AG04450 (cell line): ENCODE measurements at regions of chr5 and their contacts with region 1.

Region 1: DNA sequence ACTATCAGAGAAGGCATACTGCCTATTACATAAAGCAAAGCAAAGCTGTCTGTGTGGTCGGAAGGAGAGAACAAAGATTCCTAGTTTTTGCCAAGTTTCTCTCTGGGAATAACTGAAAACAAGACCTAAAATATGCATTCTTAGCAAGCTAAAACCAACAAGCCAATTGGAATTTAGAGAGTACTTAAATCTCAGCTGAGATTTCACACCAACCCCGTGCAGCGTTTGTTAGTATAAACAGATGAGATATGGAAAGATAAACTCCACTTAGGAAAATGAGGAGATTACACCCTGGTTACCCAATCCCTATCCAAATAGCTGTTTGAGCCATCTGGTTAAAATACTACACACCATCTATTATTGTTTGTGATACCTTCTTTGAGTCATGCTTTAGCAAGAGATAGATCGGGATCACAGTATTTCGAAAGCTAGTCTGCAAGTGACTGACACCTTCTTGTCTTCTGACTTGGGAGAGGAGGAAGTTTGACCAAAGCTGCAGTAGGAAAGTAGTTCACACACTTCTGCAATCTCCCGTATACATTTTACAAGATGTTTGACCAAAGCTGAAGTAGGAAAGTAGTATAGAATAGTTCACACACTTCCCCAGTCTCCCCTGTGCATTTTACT is 18.2 kb downstream of the FAF2 start:
- DNase-seq: peak; percentile 55
- H3K4me3 ChIP-seq: no peak overlapping the region
- H3K27ac ChIP-seq: no peak overlapping the region
- H3K27me3 ChIP-seq: no peaks in the 10 kb centered on the region
- CTCF ChIP-seq: no peak

Region 2: GRCh38 chr5:176319827-176320554 is 146.4 kb before region 1 on chr5:
- CTCF ChIA-PET with region 1: no interaction called
- POLR2A ChIA-PET with region 1: no interaction called
- DNase-seq: no peak
- H3K4me3 ChIP-seq: no peak overlapping the region
- H3K27ac ChIP-seq: no peak overlapping the region
- H3K27me3 ChIP-seq: no peaks in the 10 kb centered on the region
- CTCF ChIP-seq: 0 out of 2 replicates have a peak, but pooled peaks have one; percentile 31

Region 3: DNA sequence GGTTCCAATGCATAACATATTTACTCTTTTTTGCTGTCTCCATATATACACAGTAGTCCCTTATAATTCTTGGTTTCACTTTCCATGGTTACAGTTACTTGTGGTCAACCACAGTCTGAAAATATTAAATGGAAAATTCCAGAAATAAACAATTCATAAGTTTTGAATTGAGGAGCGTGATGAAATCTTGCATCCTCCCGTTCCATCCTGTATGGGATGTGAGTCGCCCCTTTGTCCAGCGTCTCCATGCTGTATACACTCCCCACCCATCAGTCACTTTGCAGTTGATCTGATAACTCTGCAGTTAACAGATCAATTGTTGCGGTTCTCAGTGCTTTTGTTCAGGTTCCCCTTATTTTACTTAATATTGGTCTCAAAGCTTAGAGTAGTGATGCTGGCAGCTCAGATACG is 29.7 kb before region 1 on chr5:
- CTCF ChIA-PET with region 1: no interaction called
- POLR2A ChIA-PET with region 1: interaction called, 13 read pairs
- DNase-seq: no peak
- H3K4me3 ChIP-seq: no peak overlapping the region
- H3K27ac ChIP-seq: no peak overlapping the region
- H3K27me3 ChIP-seq: no peaks in the 10 kb centered on the region
- CTCF ChIP-seq: no peak

Region 4: GRCh38 chr5:176537608-176538504 is 71.5 kb after region 1 on chr5:
- CTCF ChIA-PET with region 1: no interaction called
- POLR2A ChIA-PET with region 1: interaction called, 11 read pairs
- DNase-seq: peak; percentile 99
- H3K4me3 ChIP-seq: peak overlapping the region; percentile 99
- H3K27ac ChIP-seq: peak overlapping the region; percentile 94
- H3K27me3 ChIP-seq: no peaks in the 10 kb centered on the region
- CTCF ChIP-seq: no peak

Region 5: DNA sequence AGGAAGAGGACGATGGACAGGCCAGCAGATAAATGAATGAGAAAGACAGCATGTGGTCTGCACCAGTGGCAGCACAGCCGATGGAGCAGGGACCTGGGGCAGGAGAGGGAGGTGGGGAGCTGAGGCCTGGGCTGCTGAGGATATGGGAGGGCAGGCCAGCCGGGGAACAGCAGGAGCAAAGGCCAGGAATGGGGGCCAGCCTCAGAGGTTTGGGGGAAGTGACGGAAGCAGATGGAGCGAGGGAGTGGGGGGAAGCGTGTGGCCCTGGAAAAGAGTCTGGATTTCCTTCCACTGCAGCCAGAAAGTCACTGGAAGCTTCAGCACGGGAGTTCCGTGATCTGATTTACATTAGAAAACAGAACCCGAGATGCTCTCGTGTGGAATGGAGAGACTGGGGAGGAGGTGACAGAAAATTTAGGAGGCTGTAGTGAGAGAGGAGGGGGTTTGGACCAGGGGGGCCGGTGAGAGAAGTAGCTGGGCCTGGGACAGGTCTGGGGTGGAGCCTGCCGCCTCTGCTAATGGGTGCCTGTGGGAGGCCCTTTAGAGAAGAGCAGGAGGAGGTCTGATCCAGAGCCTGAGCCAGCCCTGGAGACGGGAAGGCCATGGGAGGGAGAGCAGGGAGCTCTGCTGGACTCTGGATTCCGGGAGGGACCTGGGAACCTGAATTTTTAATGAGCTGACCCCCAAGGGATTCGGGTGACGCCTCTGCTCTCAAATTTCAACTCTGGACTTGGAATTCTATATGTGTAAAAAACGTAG is 246.4 kb after region 1 on chr5:
- CTCF ChIA-PET with region 1: no interaction called
- POLR2A ChIA-PET with region 1: no interaction called
- DNase-seq: no peak
- H3K4me3 ChIP-seq: no peak overlapping the region
- H3K27ac ChIP-seq: no peak overlapping the region
- H3K27me3 ChIP-seq: peaks cover 32% of the 10 kb centered on the region
- CTCF ChIP-seq: no peak